ENCODE measurements at regions of chr10 and their contacts with region 1.

Region 1: GRCh38 chr10:74103560-74104248 is 46.9 kb downstream of the AP3M1 start:
- DNase-seq: no peak
- H3K4me3 ChIP-seq: no peak overlapping the region
- CTCF ChIP-seq: peak; percentile 29

Region 2: DNA sequence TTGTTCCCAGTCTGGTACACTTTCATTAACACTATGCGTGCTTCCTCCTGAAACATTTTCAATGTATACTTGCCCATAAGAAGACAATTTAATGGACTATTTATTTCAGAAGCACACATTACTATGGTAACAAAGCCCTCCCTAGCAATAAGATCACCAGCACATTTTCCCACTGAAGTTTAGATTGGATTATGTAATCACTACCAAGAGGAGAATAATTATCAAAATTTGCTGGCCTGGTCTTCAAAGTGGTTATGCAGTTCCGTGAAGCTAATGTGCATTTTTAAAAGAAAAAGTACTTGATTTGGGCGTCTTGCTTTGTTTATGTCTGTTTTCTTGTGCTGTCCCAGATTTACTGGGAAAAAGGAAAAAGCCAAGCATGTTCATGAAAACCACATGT is 15.0 kb before region 1 on chr10:
- CTCF ChIA-PET with region 1: interaction called, 10 read pairs
- POLR2A ChIA-PET with region 1: interaction called, 3 read pairs
- DNase-seq: no peak
- H3K4me3 ChIP-seq: no peak overlapping the region
- CTCF ChIP-seq: no peak

Region 3: DNA sequence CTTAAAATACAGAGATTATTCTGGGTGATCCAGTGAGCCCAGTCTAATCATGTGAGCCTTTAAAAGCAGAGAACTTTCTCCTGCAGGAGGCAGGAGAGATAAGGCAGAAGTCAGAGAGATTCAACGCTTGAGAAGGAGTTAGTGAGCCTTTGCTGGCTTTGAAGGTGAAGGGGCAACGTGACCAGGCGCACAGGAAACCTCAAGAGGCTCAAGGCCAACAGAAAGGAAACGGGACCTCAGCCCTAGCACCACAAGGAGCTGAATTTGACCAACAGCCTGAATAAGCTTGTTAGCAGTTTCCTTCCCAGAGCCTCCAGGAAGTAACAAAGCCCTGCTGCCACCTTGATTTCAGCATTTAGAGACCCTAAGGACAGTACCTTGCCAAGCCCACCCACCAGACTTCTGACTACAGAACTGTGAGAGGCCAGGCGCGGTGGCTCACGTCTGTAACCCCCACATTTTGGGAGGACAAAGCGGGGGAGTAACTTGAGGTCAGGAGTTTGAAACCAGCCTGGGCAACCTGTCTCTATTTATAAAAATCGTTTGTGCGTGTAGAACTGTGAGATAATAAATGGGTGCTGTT is 635.4 kb after region 1 on chr10:
- CTCF ChIA-PET with region 1: no interaction called
- POLR2A ChIA-PET with region 1: no interaction called
- DNase-seq: no peak
- H3K4me3 ChIP-seq: no peak overlapping the region
- CTCF ChIP-seq: peak; percentile 0